ENCODE measurements at regions of chr7 and their contacts with region 1.

Region 1: DNA sequence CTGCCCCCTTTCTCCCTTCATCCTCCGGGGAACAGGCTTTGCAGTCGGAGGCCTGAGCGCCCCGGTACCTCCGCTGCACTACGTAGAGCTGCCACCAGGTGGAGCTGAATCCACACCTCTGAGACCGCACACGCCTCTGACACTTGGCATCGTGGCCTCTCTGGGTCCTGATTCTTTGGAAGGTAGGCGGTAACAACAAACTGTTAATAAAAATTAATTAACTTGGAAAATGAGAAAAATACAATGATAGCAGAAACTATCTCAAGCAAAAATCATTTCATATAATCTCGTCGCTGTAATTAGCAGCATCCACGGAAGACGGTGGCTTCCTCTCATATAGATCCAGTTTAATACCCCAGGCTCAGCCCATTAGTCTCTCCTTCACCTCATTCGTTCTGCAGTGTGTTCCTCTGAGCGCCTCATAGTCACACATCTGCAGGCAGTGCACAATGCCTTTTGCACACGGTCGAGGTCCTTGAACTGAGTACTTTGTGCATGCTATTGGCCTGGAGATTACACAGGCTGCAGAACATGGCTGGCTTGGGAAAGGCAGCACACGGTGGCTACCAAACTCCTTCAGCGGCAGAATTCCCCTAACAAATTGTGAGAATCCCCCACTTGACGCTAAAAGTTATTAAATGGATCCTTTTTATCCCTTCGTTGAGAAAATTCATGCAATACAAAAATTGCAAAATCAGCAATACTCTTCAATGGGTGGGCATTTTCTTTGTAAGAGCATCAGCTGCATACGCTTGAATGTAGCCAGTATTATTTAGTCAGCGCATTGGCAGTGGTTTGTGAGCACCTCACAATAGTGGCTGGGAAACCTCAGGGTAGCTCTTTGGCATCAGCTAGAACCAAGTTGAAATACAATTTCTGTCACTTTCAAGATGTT is 18.7 kb downstream of the OR9A2 start:
- DNase-seq: peak; percentile 41
- ATAC-seq: peak; percentile 99
- H3K4me3 ChIP-seq: no peak overlapping the region
- H3K27ac ChIP-seq: no peak overlapping the region
- H3K4me1 ChIP-seq: no peaks in the 10 kb centered on the region
- H3K27me3 ChIP-seq: peaks cover 2% of the 10 kb centered on the region; the same call in 1 of the 2 replicates
- CTCF ChIP-seq: peak; percentile 89
- POLR2A ChIP-seq: no peak
- RAD21 ChIP-seq: peak; percentile 82

Region 2: GRCh38 chr7:142603870-142604448 is 404.3 kb before region 1 on chr7:
- CTCF ChIA-PET with region 1: no interaction called
- POLR2A ChIA-PET with region 1: no interaction called
- dilution Hi-C with region 1: no loop called
- in situ Hi-C with region 1: no loop called
- intact Hi-C with region 1: loop called (anchors 10 kb)
- DNase-seq: peak; percentile 63
- ATAC-seq: peak; percentile 73
- H3K4me3 ChIP-seq: peak overlapping the region; percentile 39; the same call in 1 of the 2 replicates
- H3K27ac ChIP-seq: no peak overlapping the region
- H3K4me1 ChIP-seq: no peaks in the 10 kb centered on the region
- H3K27me3 ChIP-seq: 0 out of 2 replicates have a peak, but pooled peaks cover 3% of the 10 kb centered on the region
- CTCF ChIP-seq: peak; percentile 87
- POLR2A ChIP-seq: no peak
- RAD21 ChIP-seq: peak; percentile 82

Region 3: GRCh38 chr7:142632291-142633134 is 375.7 kb before region 1 on chr7:
- CTCF ChIA-PET with region 1: no interaction called
- POLR2A ChIA-PET with region 1: no interaction called
- dilution Hi-C with region 1: no loop called
- in situ Hi-C with region 1: no loop called
- intact Hi-C with region 1: loop called (anchors 10 kb)
- DNase-seq: peak; percentile 60
- ATAC-seq: peak; percentile 98
- H3K4me3 ChIP-seq: no peak overlapping the region
- H3K27ac ChIP-seq: no peak overlapping the region
- H3K4me1 ChIP-seq: peaks cover 3% of the 10 kb centered on the region
- H3K27me3 ChIP-seq: peaks cover 4% of the 10 kb centered on the region; the same call in 1 of the 2 replicates
- CTCF ChIP-seq: peak; percentile 73
- POLR2A ChIP-seq: no peak
- RAD21 ChIP-seq: peak; percentile 68

Region 4: DNA sequence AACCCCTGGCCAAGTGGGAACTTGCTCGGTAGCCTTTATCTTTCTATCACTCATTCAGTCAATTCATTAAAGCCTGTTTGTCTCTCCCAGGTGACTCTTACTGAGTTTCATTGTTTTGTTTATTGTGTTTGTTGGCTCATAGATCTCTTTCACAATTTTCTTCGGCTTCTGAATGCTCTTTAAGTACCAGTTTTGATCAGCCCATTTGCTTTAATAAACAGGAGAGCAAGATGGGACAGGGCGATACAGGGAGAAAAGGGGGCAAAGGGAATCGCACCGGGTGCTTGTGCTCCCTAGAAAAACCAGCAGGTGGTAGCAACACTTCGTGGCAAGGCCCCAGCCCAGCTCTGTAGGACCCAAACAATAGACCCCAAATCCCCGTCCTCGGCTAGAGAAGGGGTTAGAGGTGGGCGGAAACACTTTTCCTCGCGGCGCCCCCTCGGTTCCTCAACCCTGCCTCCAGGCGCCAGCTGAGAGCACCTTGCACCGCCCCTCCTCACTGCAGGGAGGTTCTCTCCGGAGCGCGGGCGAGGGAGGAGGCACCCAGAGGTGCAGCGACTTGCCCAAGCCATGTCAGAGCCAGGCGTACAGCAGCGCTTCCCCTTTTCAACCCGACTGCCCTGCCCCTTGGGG is 154.4 kb before region 1 on chr7:
- CTCF ChIA-PET with region 1: no interaction called
- POLR2A ChIA-PET with region 1: no interaction called
- dilution Hi-C with region 1: no loop called
- in situ Hi-C with region 1: no loop called
- intact Hi-C with region 1: loop called (anchors 1 kb)
- DNase-seq: peak; percentile 39
- ATAC-seq: peak; percentile 68
- H3K4me3 ChIP-seq: peak overlapping the region; percentile 50
- H3K27ac ChIP-seq: no peak overlapping the region
- H3K4me1 ChIP-seq: no peaks in the 10 kb centered on the region
- H3K27me3 ChIP-seq: peaks cover 11% of the 10 kb centered on the region
- CTCF ChIP-seq: peak; percentile 60
- POLR2A ChIP-seq: no peak
- RAD21 ChIP-seq: peak; percentile 58

Region 5: DNA sequence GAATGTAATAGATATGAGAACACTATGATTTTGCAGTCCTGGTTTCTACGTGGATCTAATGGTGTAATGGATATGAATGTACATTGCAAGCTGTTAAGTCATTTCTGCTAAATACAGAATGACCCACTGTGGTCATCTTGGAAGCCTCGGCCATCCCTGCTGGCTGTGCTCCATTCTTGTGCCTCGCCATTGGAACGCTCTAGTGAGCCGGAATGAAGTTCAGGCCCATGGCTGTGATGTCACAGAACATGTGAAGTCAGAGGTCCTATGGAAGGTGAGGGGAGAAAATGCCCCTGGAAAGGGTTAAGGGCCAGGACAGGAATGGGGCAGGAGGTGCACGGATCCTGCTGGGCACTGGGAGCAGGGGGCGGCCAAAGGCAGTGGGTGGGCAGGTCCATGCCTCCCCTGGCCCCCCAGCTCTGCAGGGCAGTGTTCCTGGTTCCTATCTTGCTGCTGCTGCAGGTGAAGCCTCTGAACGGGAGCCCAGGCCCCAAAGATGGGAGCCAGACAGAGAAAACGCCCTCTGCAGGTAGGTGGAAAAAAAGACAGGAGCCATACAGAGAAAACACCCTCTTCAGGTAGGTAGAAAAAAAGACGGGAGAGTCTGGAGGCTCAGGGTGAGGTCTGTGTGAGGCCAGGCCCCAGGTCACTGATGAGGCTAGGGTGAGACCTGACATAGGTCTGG is 68.9 kb before region 1 on chr7 and contains the start of gene LLCFC1:
- CTCF ChIA-PET with region 1: no interaction called
- POLR2A ChIA-PET with region 1: no interaction called
- dilution Hi-C with region 1: no loop called
- in situ Hi-C with region 1: no loop called
- intact Hi-C with region 1: no loop called
- DNase-seq: no peak
- ATAC-seq: no peak
- H3K4me3 ChIP-seq: no peak within 1 kb of the TSS
- H3K27ac ChIP-seq: no peak within 1 kb of the TSS
- H3K4me1 ChIP-seq: no peaks in the 10 kb centered on the region
- H3K27me3 ChIP-seq: no peaks in the 10 kb centered on the region
- CTCF ChIP-seq: no peak
- POLR2A ChIP-seq: no peak
- RAD21 ChIP-seq: no peak
- total RNA-seq, gene LLCFC1: not detected in 2 replicates

Region 6: DNA sequence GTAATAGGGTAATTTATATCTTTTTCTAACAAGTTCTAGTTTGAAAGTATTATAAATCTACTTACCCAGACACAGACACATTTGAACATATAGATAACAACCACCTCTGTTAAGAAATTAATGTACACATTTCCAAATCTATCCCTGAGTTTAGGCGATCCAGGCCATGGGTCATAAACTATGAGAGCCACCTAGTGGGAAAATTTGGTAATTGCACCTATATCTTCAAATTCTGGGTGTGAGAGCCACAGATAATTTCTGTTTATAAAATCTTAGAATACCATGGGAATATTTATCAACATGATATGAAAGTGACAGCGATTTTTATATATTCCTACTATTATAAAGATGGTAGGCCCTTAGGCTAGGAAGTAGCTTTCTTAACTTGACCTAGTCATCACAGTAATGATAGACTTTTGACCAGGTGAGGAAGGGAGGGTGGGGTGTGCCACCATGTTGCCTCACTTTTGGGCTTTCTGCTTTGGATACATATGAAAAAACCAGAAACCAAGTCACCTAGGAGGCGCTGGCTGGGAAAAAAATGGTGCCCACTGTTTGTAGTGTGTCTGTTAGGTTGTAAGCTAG is 408.4 kb after region 1 on chr7:
- CTCF ChIA-PET with region 1: no interaction called
- POLR2A ChIA-PET with region 1: no interaction called
- dilution Hi-C with region 1: no loop called
- in situ Hi-C with region 1: no loop called
- intact Hi-C with region 1: loop called (anchors 5 kb)
- DNase-seq: peak; percentile 53
- ATAC-seq: peak; percentile 73
- H3K4me3 ChIP-seq: no peak overlapping the region
- H3K27ac ChIP-seq: no peak overlapping the region
- H3K4me1 ChIP-seq: peaks cover 4% of the 10 kb centered on the region
- H3K27me3 ChIP-seq: no peaks in the 10 kb centered on the region
- CTCF ChIP-seq: peak; percentile 73
- POLR2A ChIP-seq: no peak
- RAD21 ChIP-seq: peak; percentile 73

Region 7: DNA sequence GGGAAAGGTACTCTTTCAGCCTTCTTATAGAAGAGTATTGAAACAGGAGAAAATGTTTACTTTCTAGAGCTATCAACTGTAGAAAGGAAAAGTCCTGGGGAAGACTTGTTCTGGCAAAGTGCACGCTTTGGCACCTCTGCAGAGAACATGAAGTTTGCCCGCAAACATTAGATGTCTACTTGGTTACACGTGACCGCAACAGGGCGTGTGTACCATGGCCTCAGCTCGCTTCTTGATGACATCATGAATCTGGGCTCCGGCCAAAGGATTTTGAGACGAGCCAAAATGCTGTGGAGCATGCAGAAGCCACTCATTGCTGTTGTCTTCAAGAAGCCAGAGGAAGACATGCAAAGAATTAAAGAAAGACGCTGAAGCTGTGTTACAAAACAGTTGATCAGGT is 426.4 kb after region 1 on chr7:
- CTCF ChIA-PET with region 1: no interaction called
- POLR2A ChIA-PET with region 1: no interaction called
- dilution Hi-C with region 1: no loop called
- in situ Hi-C with region 1: loop called (anchors 25 kb)
- intact Hi-C with region 1: no loop called
- DNase-seq: peak; percentile 41
- ATAC-seq: no peak; the same call in 1 of the 2 replicates
- H3K4me3 ChIP-seq: no peak overlapping the region
- H3K27ac ChIP-seq: no peak overlapping the region
- H3K4me1 ChIP-seq: peaks cover 6% of the 10 kb centered on the region
- H3K27me3 ChIP-seq: no peaks in the 10 kb centered on the region
- CTCF ChIP-seq: no peak
- POLR2A ChIP-seq: no peak
- RAD21 ChIP-seq: no peak